Esophagus muscularis mucosa (tissue), 4 donors: ENCODE measurements at regions of chr2 and their contacts with region 1.

Region 1: GRCh38 chr2:160970052-160970965 is 189.9 kb upstream of the TANK start:
- DNase-seq: no peak
- H3K4me3 ChIP-seq: peak overlapping the region; percentile 21 to 38 (median 34)
- H3K27ac ChIP-seq: peak overlapping the region; percentile 33 to 68 (median 44)
- H3K4me1 ChIP-seq: peaks cover 9 to 21% (median 12%) of the 10 kb centered on the region in 4 donors
- H3K27me3 ChIP-seq: no peaks in the 10 kb centered on the region
- CTCF ChIP-seq: peak; percentile 74 to 87 (median 84)
- EP300 ChIP-seq: no peak
- POLR2A ChIP-seq: no peak

Region 2: GRCh38 chr2:160091381-160091780 is 878.9 kb before region 1 on chr2:
- intact Hi-C with region 1: no loop called
- DNase-seq: no peak
- H3K4me3 ChIP-seq: no peak overlapping the region
- H3K27ac ChIP-seq: no peak overlapping the region
- H3K4me1 ChIP-seq: no peaks in the 10 kb centered on the region
- H3K27me3 ChIP-seq: no peaks in the 10 kb centered on the region
- CTCF ChIP-seq: no peak
- EP300 ChIP-seq: no peak
- POLR2A ChIP-seq: no peak

Region 3: DNA sequence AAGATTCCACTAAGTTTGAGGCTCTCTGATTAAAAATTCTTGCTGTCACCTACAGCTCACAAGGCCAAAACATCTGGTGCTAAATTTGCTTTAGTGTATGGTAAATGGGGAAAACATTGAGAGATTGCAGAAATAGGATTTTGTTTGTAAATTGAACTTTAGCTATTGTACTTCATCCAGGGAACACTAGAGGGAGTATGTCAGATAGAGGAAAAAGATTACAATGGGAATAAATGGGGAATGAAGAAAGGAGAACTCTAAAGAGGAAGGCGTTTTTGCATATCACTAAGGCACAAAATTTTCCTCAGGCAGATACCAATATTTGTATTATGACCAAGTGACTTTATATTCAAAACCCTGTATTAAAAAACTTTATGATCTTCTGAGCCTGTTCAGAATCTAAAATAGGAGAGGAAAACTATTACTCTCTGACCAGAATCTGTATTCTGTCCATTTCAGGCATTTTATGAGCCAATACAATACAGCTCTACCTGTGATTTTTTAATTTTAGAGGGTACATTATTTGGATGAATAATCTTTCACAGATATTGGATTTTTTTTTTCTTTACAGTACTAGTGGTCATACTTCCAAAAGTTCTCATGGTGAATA is 717.9 kb before region 1 on chr2:
- intact Hi-C with region 1: loop called (anchors 5 kb)
- DNase-seq: no peak
- H3K4me3 ChIP-seq: no peak overlapping the region
- H3K27ac ChIP-seq: peak overlapping the region in 3 of 4 donors; percentile 8 to 39 (median 15)
- H3K4me1 ChIP-seq: peaks cover 13 to 15% (median 14%) of the 10 kb centered on the region in 4 donors
- H3K27me3 ChIP-seq: no peaks in the 10 kb centered on the region
- CTCF ChIP-seq: peak; percentile 78 to 87 (median 80)
- EP300 ChIP-seq: no peak
- POLR2A ChIP-seq: no peak

Region 4: DNA sequence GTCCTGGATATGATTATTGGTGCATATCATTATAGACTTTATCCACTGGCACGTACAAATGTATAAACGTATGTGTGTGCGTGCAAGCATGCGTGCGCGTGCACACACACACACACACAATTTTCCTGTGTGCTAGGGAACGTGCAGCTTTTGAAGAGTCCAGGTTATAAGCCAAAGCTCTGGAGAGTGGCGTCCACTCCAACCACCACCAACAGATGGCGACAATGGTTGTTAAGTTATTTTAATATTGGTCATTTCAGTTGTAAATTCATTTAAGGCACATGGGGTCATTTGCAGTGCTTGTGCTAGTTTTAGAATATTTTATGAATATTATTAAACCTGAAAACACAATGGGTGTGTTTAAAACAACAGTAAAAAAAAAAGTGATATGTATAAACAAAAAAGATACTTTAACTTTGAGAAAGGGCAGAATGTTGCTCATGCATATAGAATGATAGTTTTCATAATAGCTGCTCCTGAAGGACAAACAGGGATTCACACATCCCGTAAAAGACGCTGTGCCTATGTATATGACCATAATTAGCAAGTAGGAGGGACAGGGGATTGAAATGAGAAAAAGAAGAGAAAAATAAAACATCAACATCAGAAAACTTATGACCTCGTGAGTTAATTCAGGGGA is 646.0 kb before region 1 on chr2:
- intact Hi-C with region 1: loop called (anchors 5 kb)
- DNase-seq: no peak
- H3K4me3 ChIP-seq: no peak overlapping the region
- H3K27ac ChIP-seq: no peak overlapping the region
- H3K4me1 ChIP-seq: peaks cover 59 to 93% (median 87%) of the 10 kb centered on the region in 4 donors
- H3K27me3 ChIP-seq: no peaks in the 10 kb centered on the region
- CTCF ChIP-seq: peak; percentile 71 to 80 (median 72)
- EP300 ChIP-seq: no peak
- POLR2A ChIP-seq: no peak

Region 5: GRCh38 chr2:161030260-161031063 is 60.2 kb after region 1 on chr2:
- intact Hi-C with region 1: no loop called
- DNase-seq: peak; percentile 50
- H3K4me3 ChIP-seq: no peak overlapping the region
- H3K27ac ChIP-seq: peak overlapping the region in 3 of 4 donors; percentile 61 to 63 (median 62)
- H3K4me1 ChIP-seq: peaks cover 0 to 13% (median 5%) of the 10 kb centered on the region in 4 donors
- H3K27me3 ChIP-seq: no peaks in the 10 kb centered on the region
- CTCF ChIP-seq: no peak
- EP300 ChIP-seq: no peak
- POLR2A ChIP-seq: no peak